ENCODE measurements at regions of chr9 and their contacts with region 1.

Region 1: GRCh38 chr9:4792572-4793458 is at the start of gene RCL1:
- DNase-seq: peak; percentile 92 to 98 (median 95)
- ATAC-seq: peak; percentile 90
- H3K4me3 ChIP-seq: peak within 1 kb of the TSS; percentile 92 to 98
- H3K4me3 Mint-ChIP-seq: peak within 1 kb of the TSS; percentile 95
- H3K27ac ChIP-seq: peak within 1 kb of the TSS; percentile 90 to 92
- H3K27ac Mint-ChIP-seq: peak within 1 kb of the TSS; percentile 96
- H3K4me1 ChIP-seq: peaks cover 30% of the 10 kb centered on the region
- H3K4me1 Mint-ChIP-seq: peaks cover 47% of the 10 kb centered on the region
- H3K27me3 ChIP-seq: no peaks in the 10 kb centered on the region
- H3K27me3 Mint-ChIP-seq: no peaks in the 10 kb centered on the region
- CTCF ChIP-seq: no peak
- total RNA-seq, gene RCL1: 30.8 to 35.0 TPM

Region 2: GRCh38 chr9:4740638-4741364 is 52.0 kb before region 1 on chr9 and contains the start of gene AK3:
- CTCF ChIA-PET with region 1: interaction called, 3 read pairs
- POLR2A ChIA-PET with region 1: interaction called, 25 read pairs
- intact Hi-C with region 1: loop called (anchors 1 to 2 kb)
- DNase-seq: peak; percentile 71 to 94 (median 86)
- ATAC-seq: peak; percentile 93
- H3K4me3 ChIP-seq: peak within 1 kb of the TSS; percentile 76 to 97
- H3K4me3 Mint-ChIP-seq: peak within 1 kb of the TSS; percentile 87
- H3K27ac ChIP-seq: peak within 1 kb of the TSS; percentile 70 to 86
- H3K27ac Mint-ChIP-seq: peak within 1 kb of the TSS; percentile 96
- H3K4me1 ChIP-seq: peaks cover 30% of the 10 kb centered on the region
- H3K4me1 Mint-ChIP-seq: peaks cover 37% of the 10 kb centered on the region
- H3K27me3 ChIP-seq: no peaks in the 10 kb centered on the region
- H3K27me3 Mint-ChIP-seq: no peaks in the 10 kb centered on the region
- CTCF ChIP-seq: no peak
- total RNA-seq, gene AK3: 15.2 to 18.8 TPM

Region 3: GRCh38 chr9:6015278-6016157 is 1222.7 kb after region 1 on chr9 and contains the start of gene RANBP6:
- CTCF ChIA-PET with region 1: no interaction called
- POLR2A ChIA-PET with region 1: no interaction called
- intact Hi-C with region 1: loop called in 1 of 2 experiments (anchors 5 kb)
- DNase-seq: peak; percentile 83 to 94 (median 92)
- ATAC-seq: peak; percentile 99
- H3K4me3 ChIP-seq: peak within 1 kb of the TSS; percentile 76 to 80
- H3K4me3 Mint-ChIP-seq: peak within 1 kb of the TSS; percentile 93
- H3K27ac ChIP-seq: peak within 1 kb of the TSS; percentile 79 to 87
- H3K27ac Mint-ChIP-seq: peak within 1 kb of the TSS; percentile 98
- H3K4me1 ChIP-seq: peaks cover 12% of the 10 kb centered on the region
- H3K4me1 Mint-ChIP-seq: peaks cover 32% of the 10 kb centered on the region
- H3K27me3 ChIP-seq: no peaks in the 10 kb centered on the region
- H3K27me3 Mint-ChIP-seq: no peaks in the 10 kb centered on the region
- CTCF ChIP-seq: no peak
- total RNA-seq, gene RANBP6: 38.1 to 39.7 TPM